Adrenal gland (tissue), 19 donors: ENCODE measurements at regions of chr16 and their contacts with region 1.

Region 1: DNA sequence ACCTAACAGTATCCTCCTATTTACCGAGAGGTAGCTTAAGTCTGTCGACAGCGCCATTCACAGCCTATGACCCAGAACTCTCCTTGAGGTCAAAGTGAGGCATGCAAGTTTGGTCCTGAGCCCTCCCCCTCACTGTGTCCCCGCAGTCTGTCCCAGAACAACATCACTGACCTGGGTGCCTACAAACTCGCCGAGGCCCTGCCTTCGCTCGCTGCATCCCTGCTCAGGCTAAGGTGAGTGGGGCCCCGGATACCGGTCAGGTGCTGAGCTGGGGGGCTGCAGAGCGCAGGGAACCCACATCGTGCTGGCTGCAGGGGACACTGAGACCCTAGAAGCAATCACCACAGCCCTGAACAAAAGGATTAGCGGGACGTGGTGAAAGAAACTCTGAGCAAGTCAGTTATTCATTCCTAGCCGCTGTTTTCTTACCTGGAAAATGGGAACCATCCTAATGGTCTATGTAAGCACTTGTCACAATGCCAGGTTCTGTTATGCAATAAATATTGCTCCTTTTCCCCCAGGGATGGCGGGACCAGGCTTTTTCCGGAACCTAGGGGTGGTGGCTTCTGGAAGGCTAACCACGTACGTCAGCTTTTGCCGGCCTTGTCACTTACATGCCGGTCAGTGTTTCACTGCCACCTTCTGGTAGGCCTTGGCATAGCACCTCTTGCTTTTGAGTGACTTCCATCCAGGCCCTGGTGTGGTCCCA is 23.8 kb downstream of the DEXI start:
- DNase-seq: peak; percentile 94 to 99 (median 98)
- H3K4me3 ChIP-seq: no peak overlapping the region
- H3K27ac ChIP-seq: peak overlapping the region in 1 of 5 donors; percentile 64
- H3K4me1 ChIP-seq: peaks cover 27 to 35% of the 10 kb centered on the region in 2 donors
- H3K27me3 ChIP-seq: no peaks in the 10 kb centered on the region
- CTCF ChIP-seq: peak; percentile 95 to 98 (median 96)
- POLR2A ChIP-seq: no peak

Region 2: GRCh38 chr16:10509534-10510025 is 408.9 kb before region 1 on chr16:
- intact Hi-C with region 1: loop called in 1 of 2 experiments (anchors 10 kb)
- DNase-seq: peak; percentile 69 to 83 (median 74)
- H3K4me3 ChIP-seq: no peak overlapping the region
- H3K27ac ChIP-seq: no peak overlapping the region
- H3K4me1 ChIP-seq: peaks cover 5 to 6% of the 10 kb centered on the region in 2 donors
- H3K27me3 ChIP-seq: no peaks in the 10 kb centered on the region
- CTCF ChIP-seq: peak; percentile 62 to 92 (median 88)
- POLR2A ChIP-seq: no peak

Region 3: DNA sequence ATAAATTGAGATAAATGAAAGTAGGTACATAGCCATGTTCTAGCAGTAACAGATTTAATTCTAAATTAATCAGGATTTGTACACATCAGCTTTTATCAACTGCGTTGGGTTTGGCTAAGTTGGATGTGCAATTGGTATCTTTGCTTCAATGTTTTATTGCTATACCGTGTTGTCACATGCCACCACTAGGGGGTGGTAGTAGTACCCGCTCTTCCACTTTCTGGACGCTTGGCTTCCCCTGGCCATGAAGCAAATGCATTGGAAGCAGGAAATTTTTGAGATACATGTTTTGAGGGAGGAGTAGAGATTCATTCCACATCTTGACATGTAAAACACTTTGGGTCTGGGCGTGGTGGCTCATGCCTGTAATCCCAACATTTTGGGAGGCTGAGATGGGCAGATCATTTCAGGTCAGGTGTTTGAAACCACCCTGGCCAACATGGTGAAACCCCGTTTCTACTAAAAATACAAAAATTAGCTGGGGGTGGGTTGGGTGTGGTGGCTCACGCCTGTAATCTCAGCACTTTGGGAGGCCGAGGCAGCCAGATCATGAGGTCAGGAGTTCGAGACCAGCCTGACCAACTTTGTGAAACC is 396.7 kb before region 1 on chr16:
- intact Hi-C with region 1: loop called (anchors 5 to 10 kb)
- DNase-seq: peak; percentile 65 to 84 (median 76)
- H3K4me3 ChIP-seq: no peak overlapping the region
- H3K27ac ChIP-seq: no peak overlapping the region
- H3K4me1 ChIP-seq: no peaks in the 10 kb centered on the region
- H3K27me3 ChIP-seq: no peaks in the 10 kb centered on the region
- CTCF ChIP-seq: peak; percentile 66 to 86 (median 84)
- POLR2A ChIP-seq: no peak

Region 4: GRCh38 chr16:10745841-10746240 is 172.6 kb before region 1 on chr16:
- intact Hi-C with region 1: loop called in 1 of 2 experiments (anchors 5 kb)
- DNase-seq: peak in 1 of 7 donors; percentile 8
- H3K4me3 ChIP-seq: no peak overlapping the region
- H3K27ac ChIP-seq: peak overlapping the region in 1 of 5 donors; percentile 22
- H3K4me1 ChIP-seq: peaks cover 21 to 48% of the 10 kb centered on the region in 2 donors
- H3K27me3 ChIP-seq: no peaks in the 10 kb centered on the region
- CTCF ChIP-seq: no peak
- POLR2A ChIP-seq: no peak

Region 5: DNA sequence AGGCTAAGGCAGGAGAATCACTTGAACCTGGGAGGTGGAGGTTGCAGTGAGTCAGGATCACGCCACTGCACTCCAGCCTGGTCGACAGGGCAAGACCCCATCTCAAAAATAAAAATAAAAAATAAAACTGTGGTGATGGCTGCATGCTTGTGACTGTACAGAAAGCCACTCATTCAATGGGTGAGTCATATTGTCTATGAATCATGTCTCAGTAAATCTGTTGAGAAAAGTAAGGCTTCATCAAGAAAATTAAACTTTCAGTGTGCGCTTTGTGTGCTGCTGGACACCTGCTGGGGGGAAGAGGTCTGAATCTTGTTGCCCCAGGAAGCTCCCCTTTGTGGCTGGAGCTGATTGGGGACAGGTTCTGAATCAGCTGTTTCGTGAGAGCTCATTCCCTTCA is 163.5 kb before region 1 on chr16:
- intact Hi-C with region 1: loop called in 1 of 2 experiments (anchors 5 kb)
- DNase-seq: no peak
- H3K4me3 ChIP-seq: no peak overlapping the region
- H3K27ac ChIP-seq: peak overlapping the region in 2 of 5 donors; percentile 12 to 20
- H3K4me1 ChIP-seq: peaks cover 1 to 13% of the 10 kb centered on the region in 2 donors
- H3K27me3 ChIP-seq: no peaks in the 10 kb centered on the region
- CTCF ChIP-seq: no peak
- POLR2A ChIP-seq: no peak

Region 6: DNA sequence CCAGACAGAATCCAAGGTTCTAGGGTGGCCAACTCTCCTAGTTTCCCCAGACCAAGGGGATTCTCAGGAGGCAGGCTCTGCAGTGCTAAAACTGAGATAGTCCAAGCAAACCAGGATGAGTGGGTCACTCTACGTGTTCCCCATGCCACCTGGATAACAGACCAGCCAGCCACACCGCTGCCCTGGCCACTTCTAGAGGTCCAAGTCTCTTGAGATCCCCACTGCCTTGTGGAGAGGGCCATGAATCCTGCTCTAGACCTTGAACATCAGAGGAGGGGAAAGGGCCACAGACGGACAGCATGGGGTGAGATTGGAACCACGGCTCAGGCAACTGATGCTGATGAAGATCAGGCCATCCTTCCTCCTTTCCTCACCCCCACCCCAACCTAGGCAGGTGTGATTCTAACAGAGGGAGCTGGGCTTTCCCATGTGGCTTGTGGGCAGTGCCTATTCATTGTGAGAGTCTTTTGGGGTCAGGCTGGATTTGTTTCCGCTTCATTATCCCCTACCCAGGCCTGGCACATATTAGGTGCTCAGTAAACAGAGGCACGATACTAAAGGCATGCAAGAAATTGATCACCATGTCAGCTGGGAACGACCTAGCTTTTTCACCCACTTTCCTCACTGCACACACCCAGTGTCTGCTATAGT is 83.0 kb before region 1 on chr16:
- intact Hi-C with region 1: loop called in 1 of 2 experiments (anchors 10 kb)
- DNase-seq: no peak
- H3K4me3 ChIP-seq: no peak overlapping the region
- H3K27ac ChIP-seq: no peak overlapping the region
- H3K4me1 ChIP-seq: no peaks in the 10 kb centered on the region
- H3K27me3 ChIP-seq: no peaks in the 10 kb centered on the region
- CTCF ChIP-seq: no peak
- POLR2A ChIP-seq: no peak

Region 7: GRCh38 chr16:10964039-10964890 is 45.8 kb after region 1 on chr16:
- intact Hi-C with region 1: no loop called
- DNase-seq: peak; percentile 80 to 93 (median 87)
- H3K4me3 ChIP-seq: no peak overlapping the region
- H3K27ac ChIP-seq: peak overlapping the region in 1 of 5 donors; percentile 31
- H3K4me1 ChIP-seq: peaks cover 6 to 19% of the 10 kb centered on the region in 2 donors
- H3K27me3 ChIP-seq: no peaks in the 10 kb centered on the region
- CTCF ChIP-seq: peak; percentile 89 to 96 (median 93)
- POLR2A ChIP-seq: no peak